ENCODE measurements at regions of chr3 and their contacts with region 1.

Region 1: GRCh38 chr3:15405448-15406050 is 21.8 kb downstream of the METTL6 start:
- DNase-seq: no peak

Region 2: DNA sequence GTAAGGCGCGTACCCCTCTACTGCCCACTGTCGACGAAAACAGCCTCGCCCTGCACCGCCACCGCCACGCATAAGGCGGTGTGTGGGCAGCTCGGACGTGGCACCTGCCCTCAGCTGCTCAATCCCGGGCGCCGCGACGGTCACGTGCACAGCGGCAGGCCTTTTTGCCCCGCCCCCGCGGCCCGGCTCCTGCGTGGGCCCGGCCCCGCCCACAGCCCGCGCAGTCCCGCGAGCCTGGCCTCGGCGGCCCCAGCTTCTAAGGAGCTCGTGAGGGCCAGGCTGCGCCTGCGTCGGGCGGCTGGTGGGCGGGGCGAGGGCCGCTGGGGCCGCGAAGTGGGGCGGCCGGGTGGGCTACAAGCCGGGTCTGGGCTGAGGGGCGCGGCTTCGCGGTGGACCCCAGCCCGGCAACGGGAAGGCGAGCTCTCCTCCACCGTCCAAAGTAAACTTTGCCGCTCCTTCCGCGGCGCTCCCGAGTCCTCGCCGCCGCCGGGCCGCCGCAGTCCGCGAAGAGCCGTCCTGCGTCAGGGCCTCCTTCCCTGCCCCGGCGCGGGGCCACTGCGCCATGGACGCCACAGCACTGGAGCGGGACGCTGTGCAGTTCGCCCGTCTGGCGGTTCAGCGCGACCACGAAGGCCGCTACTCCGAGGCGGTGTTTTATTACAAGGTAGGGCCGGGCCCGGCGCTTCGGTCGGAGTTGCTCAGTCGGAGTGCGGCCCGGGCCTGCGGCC is 199.5 kb before region 1 on chr3 and contains the start of gene CAPN7:
- intact Hi-C with region 1: loop called in 1 of 2 experiments (anchors 10 kb)
- DNase-seq: peak; percentile 98
- total RNA-seq, gene CAPN7: 28.4 to 39.5 TPM

Region 3: DNA sequence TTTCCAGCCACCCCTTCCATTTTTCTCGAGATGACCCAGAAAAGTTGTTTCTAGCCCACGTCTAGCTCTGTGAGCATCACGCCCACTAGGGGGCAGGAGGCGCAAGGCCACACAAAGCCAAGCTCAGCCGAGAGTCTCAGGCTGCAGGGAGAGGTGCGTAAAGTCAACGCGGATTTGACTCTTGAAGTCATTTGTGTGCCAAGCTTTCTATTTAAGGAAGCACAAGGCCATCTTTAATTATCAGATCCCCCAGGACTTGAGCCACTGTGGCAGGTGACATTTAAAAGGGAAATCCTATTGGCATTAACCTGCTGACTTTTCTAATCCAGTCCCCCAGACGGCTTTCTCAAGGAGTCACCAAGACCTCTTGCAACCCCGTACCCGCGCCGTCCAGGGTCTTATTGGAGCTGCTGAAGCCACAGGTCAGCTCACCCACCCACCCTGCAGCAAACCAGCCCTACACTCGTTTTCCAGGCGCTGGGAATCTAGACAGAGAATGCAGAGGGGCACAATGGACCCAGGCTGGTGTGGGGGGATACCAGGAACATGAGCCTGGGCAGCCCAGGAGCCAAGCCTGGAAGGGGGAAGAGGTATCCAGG is 137.4 kb before region 1 on chr3:
- intact Hi-C with region 1: loop called in 1 of 2 experiments (anchors 5 kb)
- DNase-seq: peak; percentile 96

Region 4: GRCh38 chr3:15345608-15346137 is 59.9 kb before region 1 on chr3:
- intact Hi-C with region 1: no loop called
- DNase-seq: no peak

Region 5: GRCh38 chr3:16370872-16371740 is 965.6 kb after region 1 on chr3:
- intact Hi-C with region 1: no loop called
- DNase-seq: no peak

Measured in posterior vena cava (tissue), 2 donors.